Left lung (tissue), 14 donors: ENCODE measurements at regions of chr7 and their contacts with region 1.

Region 1: DNA sequence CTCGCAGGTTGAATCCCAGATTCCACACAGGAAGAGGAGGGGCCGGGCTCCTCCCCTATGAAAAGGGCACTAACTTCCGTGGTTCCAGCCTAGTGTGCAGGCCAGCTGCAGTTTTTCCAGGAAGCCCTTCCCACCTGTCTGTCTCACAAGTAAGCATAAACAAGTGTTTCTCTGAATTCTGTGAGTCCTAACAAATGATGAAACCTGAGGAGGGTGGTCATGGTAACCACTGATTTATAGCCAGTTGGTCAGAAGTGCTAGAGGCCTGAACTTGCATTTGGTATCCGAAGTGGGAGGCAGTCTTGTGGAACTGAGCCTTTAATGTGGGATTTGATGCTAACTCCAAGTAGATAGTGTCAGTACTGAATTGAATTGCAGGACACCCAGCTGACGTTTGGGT is 54.7 kb upstream of the STEAP4 start:
- DNase-seq: no peak
- ATAC-seq: no peak
- H3K4me3 ChIP-seq: no peak overlapping the region
- H3K27ac ChIP-seq: no peak overlapping the region
- H3K4me1 ChIP-seq: peaks cover 0 to 13% of the 10 kb centered on the region in 2 donors
- H3K27me3 ChIP-seq: no peaks in the 10 kb centered on the region
- CTCF ChIP-seq: no peak

Region 2: GRCh38 chr7:88243345-88243909 is 117.9 kb before region 1 on chr7:
- intact Hi-C with region 1: loop called in 1 of 2 experiments (anchors 5 kb)
- DNase-seq: peak in 1 of 4 donors; percentile 48
- ATAC-seq: peak; percentile 100
- H3K4me3 ChIP-seq: no peak overlapping the region
- H3K27ac ChIP-seq: no peak overlapping the region
- H3K4me1 ChIP-seq: peaks cover 0 to 3% of the 10 kb centered on the region in 2 donors
- H3K27me3 ChIP-seq: no peaks in the 10 kb centered on the region
- CTCF ChIP-seq: peak; percentile 67 to 68